Activated T-helper 1 cell treated with anti-CD3 and anti-CD28 coated beads, Interleukin-12 subunit alpha, Interleukin-12 subunit beta, Interleukin-2, Interleukin-4 antibody, amounts not matched to agents 30 ng/mL and 10 ng/mL and 1 ng/mL, durations not matched to agents 14 hours and 24 hours and 36 hours (primary cell): ENCODE measurements at regions of chr9 and their contacts with region 1.

Region 1: GRCh38 chr9:95875305-95876137 is at the start of gene ERCC6L2:
- DNase-seq: peak; percentile 92
- H3K4me3 Mint-ChIP-seq: no peak within 1 kb of the TSS
- H3K27ac Mint-ChIP-seq: no peak within 1 kb of the TSS
- H3K4me1 Mint-ChIP-seq: peaks cover 33% of the 10 kb centered on the region
- H3K27me3 Mint-ChIP-seq: no peaks in the 10 kb centered on the region
- total RNA-seq, gene ERCC6L2: 31.2 and 33.7 TPM in 2 replicates

Region 2: DNA sequence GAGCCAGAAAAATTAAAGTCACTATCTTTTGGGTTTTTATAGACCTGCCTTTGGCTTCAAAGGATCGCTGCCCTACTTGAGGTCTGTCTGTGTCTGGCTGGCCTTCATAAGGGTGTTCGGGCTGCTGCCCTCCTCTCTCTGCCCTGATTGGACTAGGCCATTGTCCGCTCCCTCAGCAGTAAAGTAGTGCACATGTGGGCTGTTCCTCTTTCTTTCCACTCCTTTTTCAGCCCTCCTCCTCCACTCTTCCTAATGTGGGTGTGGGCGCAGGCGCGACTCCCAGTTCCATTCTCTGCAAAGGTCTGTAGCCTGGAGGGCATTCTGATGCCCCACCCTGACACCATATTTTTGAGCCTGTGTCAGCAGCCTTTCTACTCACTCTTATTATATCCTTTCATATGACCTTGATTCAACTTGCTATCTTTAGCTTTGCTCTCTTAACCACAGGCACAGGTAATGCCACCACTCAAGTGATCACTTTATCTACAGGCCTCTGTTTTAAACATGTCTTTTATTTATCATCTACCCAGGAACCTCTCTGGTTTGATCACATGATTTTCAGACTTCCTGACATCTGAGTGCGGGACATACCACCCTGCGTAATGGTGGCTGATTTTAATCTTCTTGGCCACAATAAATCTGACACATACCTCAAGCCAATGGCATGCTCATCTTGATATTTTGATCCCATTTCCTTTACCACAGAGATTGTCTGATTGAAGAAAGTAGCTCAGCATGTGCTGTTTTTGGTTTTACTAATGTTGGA is 1004.5 kb before region 1 on chr9:
- intact Hi-C with region 1: loop called (anchors 10 kb)
- DNase-seq: no peak
- H3K4me3 Mint-ChIP-seq: no peak overlapping the region
- H3K27ac Mint-ChIP-seq: peak overlapping the region; percentile 75
- H3K4me1 Mint-ChIP-seq: peaks cover 58% of the 10 kb centered on the region
- H3K27me3 Mint-ChIP-seq: peaks cover 4% of the 10 kb centered on the region

Region 3: DNA sequence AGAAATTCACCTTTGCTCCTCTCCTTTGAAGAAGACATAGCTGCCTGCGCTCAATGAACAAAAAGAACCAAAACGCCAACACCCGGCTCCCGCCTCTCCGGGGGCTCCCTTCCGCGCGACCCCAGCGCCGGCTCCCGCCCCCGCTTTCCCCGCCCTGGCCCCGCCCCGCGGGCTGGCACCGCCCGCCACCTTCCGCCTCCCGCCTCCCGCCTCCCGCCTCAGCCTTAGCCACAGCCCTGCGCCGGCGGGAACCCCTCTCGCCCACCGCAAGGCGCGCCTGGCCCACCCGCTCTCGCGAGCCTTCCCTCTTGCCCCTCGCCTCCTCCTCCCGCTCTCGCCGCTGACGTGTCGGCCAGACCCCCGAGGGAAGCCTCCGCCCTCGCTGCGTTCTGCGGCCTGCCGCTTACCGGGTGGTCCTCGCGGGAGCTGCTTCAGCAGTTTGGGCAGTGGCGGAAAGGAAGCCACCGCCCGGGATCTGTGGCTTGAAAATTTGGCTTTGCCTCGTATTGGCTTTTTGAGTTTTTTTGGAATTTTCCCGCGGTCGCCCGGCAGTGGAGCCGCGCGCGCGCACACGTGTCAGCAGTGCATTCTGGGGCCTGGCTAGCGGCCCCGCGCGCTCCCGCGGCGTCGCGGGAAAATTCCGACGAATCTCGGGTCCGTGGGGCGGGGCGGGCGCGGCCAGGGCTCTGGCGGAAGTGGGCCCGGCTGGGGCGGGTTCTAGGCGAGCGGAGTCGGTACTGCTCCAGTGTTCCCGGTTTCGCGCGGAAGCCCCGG is 558.2 kb before region 1 on chr9 and contains the start of gene FANCC:
- intact Hi-C with region 1: loop called (anchors 5 kb)
- DNase-seq: peak; percentile 84
- H3K4me3 Mint-ChIP-seq: peak within 1 kb of the TSS; percentile 91
- H3K27ac Mint-ChIP-seq: peak within 1 kb of the TSS; percentile 95
- H3K4me1 Mint-ChIP-seq: peaks cover 25% of the 10 kb centered on the region
- H3K27me3 Mint-ChIP-seq: peaks cover 12% of the 10 kb centered on the region
- total RNA-seq, gene FANCC: 18.7 and 23.7 TPM in 2 replicates

Region 4: GRCh38 chr9:95822583-95823431 is 52.7 kb before region 1 on chr9:
- intact Hi-C with region 1: loop called (anchors 1 kb)
- DNase-seq: peak; percentile 54
- H3K4me3 Mint-ChIP-seq: no peak overlapping the region
- H3K27ac Mint-ChIP-seq: peak overlapping the region; percentile 77
- H3K4me1 Mint-ChIP-seq: peaks cover 29% of the 10 kb centered on the region
- H3K27me3 Mint-ChIP-seq: peaks cover 31% of the 10 kb centered on the region

Region 5: GRCh38 chr9:95896580-95896979 is 21.1 kb after region 1 on chr9:
- intact Hi-C with region 1: loop called (anchors 2 kb)
- DNase-seq: no peak
- H3K4me3 Mint-ChIP-seq: peak overlapping the region; percentile 60
- H3K27ac Mint-ChIP-seq: peak overlapping the region; percentile 80
- H3K4me1 Mint-ChIP-seq: peaks cover 39% of the 10 kb centered on the region
- H3K27me3 Mint-ChIP-seq: no peaks in the 10 kb centered on the region